Activated naive CD4-positive, alpha-beta T cell treated with anti-CD3 and anti-CD28 coated beads for 36 hours (primary cell): ENCODE measurements at regions of chr4 and their contacts with region 1.

Region 1: DNA sequence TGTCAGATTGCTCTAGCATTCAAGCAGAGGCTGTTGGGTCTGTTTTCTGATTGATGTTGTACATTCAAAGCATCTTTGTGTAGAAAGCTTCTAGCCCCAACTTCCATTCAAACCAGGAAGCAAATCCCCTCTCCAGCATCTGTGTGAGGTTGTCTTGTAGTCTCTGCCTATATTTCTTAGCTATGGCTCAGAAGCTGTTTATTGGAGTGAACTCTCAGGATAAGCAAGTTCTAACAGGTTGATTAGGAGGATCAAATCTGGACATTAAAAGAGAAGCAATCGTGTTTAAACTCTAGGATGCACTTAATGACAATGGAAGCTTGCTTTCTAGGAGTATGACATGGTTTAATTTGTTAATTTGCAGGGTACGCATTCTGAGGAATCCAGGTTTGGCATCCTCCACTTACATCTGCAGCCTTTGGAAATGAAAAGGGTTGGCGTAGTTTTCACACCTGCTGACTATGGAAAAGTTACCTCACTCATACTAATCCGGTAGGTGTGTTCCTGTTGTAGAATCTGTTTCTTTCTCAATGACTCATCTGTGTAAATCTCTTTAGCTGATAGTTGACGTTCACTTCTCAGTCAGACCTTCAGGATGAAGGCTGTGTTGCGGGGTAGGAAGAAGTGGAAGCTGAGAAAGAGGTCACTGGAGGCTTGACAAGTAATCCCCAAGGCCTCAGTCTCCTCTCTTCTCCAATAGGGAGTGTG is 88.0 kb upstream of the TLR2 start:
- DNase-seq: peak; percentile 30
- H3K4me3 Mint-ChIP-seq: no peak overlapping the region
- H3K27ac Mint-ChIP-seq: peak overlapping the region; percentile 44
- H3K4me1 Mint-ChIP-seq: peaks cover 30% of the 10 kb centered on the region
- H3K27me3 Mint-ChIP-seq: no peaks in the 10 kb centered on the region

Region 2: GRCh38 chr4:153095448-153096204 is 500.4 kb before region 1 on chr4:
- CTCF ChIA-PET with region 1: no interaction called
- intact Hi-C with region 1: no loop called
- DNase-seq: no peak
- H3K4me3 Mint-ChIP-seq: no peak overlapping the region
- H3K27ac Mint-ChIP-seq: no peak overlapping the region
- H3K4me1 Mint-ChIP-seq: peaks cover 4% of the 10 kb centered on the region
- H3K27me3 Mint-ChIP-seq: no peaks in the 10 kb centered on the region

Region 3: DNA sequence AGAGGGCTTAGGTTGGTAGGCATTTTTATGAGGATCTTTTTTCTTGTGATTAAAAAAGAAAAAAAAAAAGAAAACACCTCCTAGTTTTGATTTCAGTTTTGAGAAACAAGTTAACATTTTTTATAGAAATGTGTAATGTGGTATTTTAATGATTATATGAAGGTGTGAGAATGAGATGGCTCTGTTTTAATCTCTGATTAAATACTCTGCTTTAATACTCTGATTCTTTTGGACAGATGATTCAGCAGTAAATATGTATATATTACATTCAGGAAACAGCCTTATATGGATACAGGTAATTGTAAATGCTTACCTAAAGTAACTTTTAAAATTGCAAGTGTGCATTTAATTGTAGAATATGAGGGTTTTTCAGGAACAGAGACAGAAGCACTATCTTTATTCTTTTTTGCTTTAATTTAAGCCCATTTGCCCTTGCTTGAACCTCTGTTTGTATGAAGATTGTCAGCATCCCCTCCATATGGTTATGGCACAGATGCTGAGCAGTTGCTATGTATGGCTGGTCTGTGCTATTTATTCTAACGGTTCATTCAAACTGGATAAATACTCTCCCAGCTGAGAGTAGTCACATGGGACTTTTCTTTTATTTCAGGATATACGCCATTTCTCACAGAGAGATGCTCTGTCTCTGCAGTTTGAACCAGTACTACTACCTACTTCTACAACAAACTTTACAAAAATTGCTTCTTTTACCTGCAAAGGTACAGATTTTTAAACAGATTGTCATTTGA is 12.9 kb before region 1 on chr4:
- CTCF ChIA-PET with region 1: interaction called, 5 read pairs
- intact Hi-C with region 1: loop called (anchors 2 kb)
- DNase-seq: no peak
- H3K4me3 Mint-ChIP-seq: no peak overlapping the region
- H3K27ac Mint-ChIP-seq: no peak overlapping the region
- H3K4me1 Mint-ChIP-seq: peaks cover 39% of the 10 kb centered on the region
- H3K27me3 Mint-ChIP-seq: no peaks in the 10 kb centered on the region

Region 4: GRCh38 chr4:153799694-153800074 is 203.6 kb after region 1 on chr4:
- CTCF ChIA-PET with region 1: no interaction called
- intact Hi-C with region 1: no loop called
- DNase-seq: no peak
- H3K4me3 Mint-ChIP-seq: no peak overlapping the region
- H3K27ac Mint-ChIP-seq: no peak overlapping the region
- H3K4me1 Mint-ChIP-seq: no peaks in the 10 kb centered on the region
- H3K27me3 Mint-ChIP-seq: peaks cover 18% of the 10 kb centered on the region